H1 (cell line): ENCODE measurements at regions of chr21 and their contacts with region 1.

Region 1: DNA sequence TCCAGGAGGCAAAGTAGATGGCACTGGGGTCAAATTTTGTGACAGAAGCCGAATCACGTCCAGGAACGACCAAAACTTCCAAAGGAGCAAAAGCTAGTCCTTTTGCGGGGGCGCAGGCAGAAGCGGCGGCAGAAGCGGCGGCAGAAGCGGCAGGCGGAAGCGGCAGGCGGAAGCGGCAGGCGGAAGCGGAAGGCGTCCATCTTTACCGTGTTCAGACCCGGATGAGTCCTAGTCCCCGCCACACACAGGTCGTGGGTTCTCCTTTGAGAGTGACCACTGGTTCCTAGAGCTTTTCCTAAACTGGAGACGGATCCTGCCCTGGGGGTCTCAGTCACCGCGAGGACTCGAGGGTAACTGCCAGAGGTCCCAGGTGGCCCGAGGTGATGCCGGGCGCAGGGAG is 53.6 kb downstream of the POFUT2 start:
- DNase-seq: no peak
- H3K4me3 ChIP-seq: no peak overlapping the region
- H3K27ac ChIP-seq: no peak overlapping the region
- H3K4me1 ChIP-seq: no peaks in the 10 kb centered on the region
- H3K27me3 ChIP-seq: no peaks in the 10 kb centered on the region
- CTCF ChIP-seq: no peak
- EP300 ChIP-seq: no peak
- POLR2A ChIP-seq: no peak
- RAD21 ChIP-seq: no peak

Region 2: DNA sequence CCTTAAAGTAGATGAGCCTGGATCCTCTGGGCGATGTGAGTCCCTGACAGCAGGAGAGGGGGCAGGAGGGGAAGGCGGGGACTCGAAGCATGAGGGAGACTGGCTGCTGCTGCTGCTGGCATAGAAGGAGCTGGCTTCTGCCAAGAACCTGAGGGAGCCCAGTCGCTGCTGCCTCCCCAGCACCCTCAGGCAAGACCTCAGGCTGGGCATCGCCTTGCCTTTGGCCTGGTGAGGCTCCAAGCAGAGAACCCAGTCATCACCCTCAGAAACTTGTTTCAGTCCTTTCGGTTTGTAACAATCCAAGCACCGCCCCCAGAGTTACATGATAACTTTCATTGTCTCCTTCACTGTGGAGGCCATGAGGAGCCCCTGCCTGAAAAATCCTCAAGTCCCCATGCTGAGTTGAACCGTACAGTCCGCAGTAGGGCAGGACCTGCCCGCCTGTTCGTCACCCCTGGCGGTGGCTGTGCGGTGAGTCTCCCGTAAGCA is 14.8 kb after region 1 on chr21:
- CTCF ChIA-PET with region 1: interaction called, 11 read pairs
- POLR2A ChIA-PET with region 1: interaction called, 4 read pairs
- DNase-seq: peak in 1 of 2 experiments; percentile 62
- H3K4me3 ChIP-seq: peak overlapping the region in 3 of 4 experiments; percentile 26 to 46 (median 26); a peak in 5 of 8 replicates
- H3K27ac ChIP-seq: no peak overlapping the region
- H3K4me1 ChIP-seq: peaks cover 0 to 13% (median 7%) of the 10 kb centered on the region in 4 experiments; a peak in 5 of 7 replicates
- H3K27me3 ChIP-seq: no peaks in the 10 kb centered on the region; a peak in 1 of 7 replicates
- CTCF ChIP-seq: no peak
- EP300 ChIP-seq: no peak
- POLR2A ChIP-seq: no peak
- RAD21 ChIP-seq: no peak